Breast epithelium (tissue), 4 donors: ENCODE measurements at regions of chr2 and their contacts with region 1.

Region 1: GRCh38 chr2:70828914-70829824 is 6.4 kb downstream of the CD207 start:
- DNase-seq: no peak
- H3K4me3 ChIP-seq: no peak overlapping the region
- H3K27ac ChIP-seq: peak overlapping the region in 1 of 2 donors; percentile 25
- H3K4me1 ChIP-seq: no peaks in the 10 kb centered on the region
- H3K27me3 ChIP-seq: no peaks in the 10 kb centered on the region
- CTCF ChIP-seq: no peak
- POLR2A ChIP-seq: no peak

Region 2: GRCh38 chr2:70793450-70793849 is 35.7 kb before region 1 on chr2:
- intact Hi-C with region 1: loop called (anchors 2 kb)
- DNase-seq: no peak
- H3K4me3 ChIP-seq: no peak overlapping the region
- H3K27ac ChIP-seq: no peak overlapping the region
- H3K4me1 ChIP-seq: no peaks in the 10 kb centered on the region
- H3K27me3 ChIP-seq: peaks cover 0 to 33% of the 10 kb centered on the region in 2 donors
- CTCF ChIP-seq: no peak
- POLR2A ChIP-seq: no peak